Aorta (tissue), 5 donors: ENCODE measurements at regions of chr9 and their contacts with region 1.

Region 1: DNA sequence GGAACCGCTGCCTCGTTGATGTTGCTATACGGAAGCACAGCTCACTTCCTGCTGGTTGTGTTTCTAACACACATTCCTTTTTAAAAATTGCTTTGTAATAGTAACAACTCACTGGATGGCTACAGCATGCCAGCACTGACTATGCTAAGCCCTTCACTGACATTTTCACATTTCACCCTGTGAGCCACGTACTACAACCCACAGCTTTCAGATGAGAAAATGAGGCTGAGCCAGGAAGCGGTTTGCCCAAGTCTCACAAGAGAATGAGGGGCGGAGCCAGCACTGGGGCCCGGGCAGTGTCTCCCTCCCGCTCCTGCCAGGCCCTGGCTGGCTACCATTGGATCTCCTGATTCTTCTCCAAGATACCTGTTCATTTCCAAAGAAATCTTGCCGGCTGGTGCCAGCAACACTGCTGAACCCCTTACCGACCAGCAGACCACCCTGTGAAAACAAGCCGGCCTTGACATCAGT is 38.3 kb downstream of the FAM78A start:
- DNase-seq: peak; percentile 88 to 89
- ATAC-seq: peak; percentile 78
- H3K4me3 ChIP-seq: no peak overlapping the region
- H3K27ac ChIP-seq: no peak overlapping the region
- H3K4me1 ChIP-seq: no peaks in the 10 kb centered on the region
- H3K27me3 ChIP-seq: no peaks in the 10 kb centered on the region

Region 2: DNA sequence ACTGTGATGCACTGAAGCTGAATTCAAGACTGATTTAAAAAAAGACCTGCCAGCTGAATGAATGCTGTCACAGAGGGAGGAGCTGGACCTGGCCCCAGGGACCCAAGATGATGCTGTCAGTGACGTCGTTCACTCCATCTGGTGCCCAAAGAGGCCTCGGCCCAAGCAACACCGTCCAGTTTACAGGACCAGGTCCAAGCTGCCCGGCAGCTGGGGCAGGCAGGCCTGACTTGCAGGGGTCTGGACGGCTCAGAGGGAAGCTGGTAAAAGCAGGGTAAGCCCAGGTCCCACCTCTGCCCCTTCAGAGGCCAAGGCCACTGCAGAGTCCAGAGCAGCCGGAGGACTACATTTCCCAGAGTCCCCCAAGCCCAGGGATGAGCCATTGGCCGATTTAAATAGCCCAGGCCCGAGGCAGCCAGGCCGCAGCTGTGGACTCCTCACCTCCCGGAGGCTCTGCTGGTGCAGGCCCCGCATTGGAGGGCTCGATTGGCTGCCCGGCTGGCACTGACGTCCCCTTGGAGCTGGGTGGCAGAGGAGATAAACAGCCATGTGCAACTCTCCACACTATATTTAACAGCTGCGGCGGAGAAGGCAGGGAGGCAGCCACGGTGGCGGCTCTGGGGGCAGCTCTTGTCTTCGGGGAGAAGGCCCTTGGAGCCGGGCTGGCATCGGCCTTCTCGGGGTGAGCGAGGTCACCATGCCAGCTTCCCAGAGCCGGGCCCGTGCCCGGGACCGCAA is 51.5 kb after region 1 on chr9 and contains the start of gene PLPP7:
- intact Hi-C with region 1: loop called in 1 of 2 experiments (anchors 5 kb)
- DNase-seq: peak; percentile 87 to 92
- ATAC-seq: peak; percentile 93
- H3K4me3 ChIP-seq: peak within 1 kb of the TSS; percentile 11 to 36
- H3K27ac ChIP-seq: peak within 1 kb of the TSS in 1 of 2 donors; percentile 8
- H3K4me1 ChIP-seq: no peaks in the 10 kb centered on the region
- H3K27me3 ChIP-seq: no peaks in the 10 kb centered on the region
- total RNA-seq, gene PLPP7: 6.6 to 9.5 TPM